CD4-positive, alpha-beta memory T cell (primary cell): ENCODE measurements at regions of chr21 and their contacts with region 1.

Region 1: GRCh38 chr21:35020902-35021301 is 28.2 kb downstream of the RUNX1 start:
- DNase-seq: no peak
- H3K4me3 ChIP-seq: no peak overlapping the region
- H3K4me3 Mint-ChIP-seq: peak overlapping the region in 4 of 8 donors; percentile 18 to 46 (median 44)
- H3K27ac ChIP-seq: peak overlapping the region; percentile 7
- H3K27ac Mint-ChIP-seq: peak overlapping the region; percentile 73 to 96 (median 82)
- H3K4me1 ChIP-seq: peaks cover 95% of the 10 kb centered on the region
- H3K4me1 Mint-ChIP-seq: peaks cover 74 to 94% (median 83%) of the 10 kb centered on the region in 4 donors
- H3K27me3 ChIP-seq: no peaks in the 10 kb centered on the region
- H3K27me3 Mint-ChIP-seq: no peaks in the 10 kb centered on the region

Region 2: GRCh38 chr21:34807146-34807880 is 213.6 kb before region 1 on chr21:
- CTCF ChIA-PET with region 1: no interaction called
- POLR2A ChIA-PET with region 1: no interaction called
- intact Hi-C with region 1: no loop called
- DNase-seq: peak; percentile 20 to 90 (median 24)
- H3K4me3 ChIP-seq: no peak overlapping the region
- H3K4me3 Mint-ChIP-seq: peak overlapping the region in 4 of 8 donors; percentile 26 to 79 (median 69)
- H3K27ac ChIP-seq: peak overlapping the region; percentile 59
- H3K27ac Mint-ChIP-seq: peak overlapping the region; percentile 75 to 99 (median 91)
- H3K4me1 ChIP-seq: peaks cover 56% of the 10 kb centered on the region
- H3K4me1 Mint-ChIP-seq: peaks cover 61 to 89% (median 73%) of the 10 kb centered on the region in 4 donors
- H3K27me3 ChIP-seq: no peaks in the 10 kb centered on the region
- H3K27me3 Mint-ChIP-seq: no peaks in the 10 kb centered on the region

Region 3: GRCh38 chr21:35002879-35003722 is 17.8 kb before region 1 on chr21:
- CTCF ChIA-PET with region 1: interaction called, 3 read pairs
- POLR2A ChIA-PET with region 1: interaction called, 17 read pairs
- intact Hi-C with region 1: loop called (anchors 2 kb)
- DNase-seq: no peak
- H3K4me3 ChIP-seq: no peak overlapping the region
- H3K4me3 Mint-ChIP-seq: peak overlapping the region in 2 of 8 donors; percentile 3 to 24
- H3K27ac ChIP-seq: no peak overlapping the region
- H3K27ac Mint-ChIP-seq: peak overlapping the region in 6 of 7 donors; percentile 3 to 72 (median 12)
- H3K4me1 ChIP-seq: peaks cover 81% of the 10 kb centered on the region
- H3K4me1 Mint-ChIP-seq: peaks cover 76 to 97% (median 87%) of the 10 kb centered on the region in 4 donors
- H3K27me3 ChIP-seq: no peaks in the 10 kb centered on the region
- H3K27me3 Mint-ChIP-seq: no peaks in the 10 kb centered on the region

Region 4: DNA sequence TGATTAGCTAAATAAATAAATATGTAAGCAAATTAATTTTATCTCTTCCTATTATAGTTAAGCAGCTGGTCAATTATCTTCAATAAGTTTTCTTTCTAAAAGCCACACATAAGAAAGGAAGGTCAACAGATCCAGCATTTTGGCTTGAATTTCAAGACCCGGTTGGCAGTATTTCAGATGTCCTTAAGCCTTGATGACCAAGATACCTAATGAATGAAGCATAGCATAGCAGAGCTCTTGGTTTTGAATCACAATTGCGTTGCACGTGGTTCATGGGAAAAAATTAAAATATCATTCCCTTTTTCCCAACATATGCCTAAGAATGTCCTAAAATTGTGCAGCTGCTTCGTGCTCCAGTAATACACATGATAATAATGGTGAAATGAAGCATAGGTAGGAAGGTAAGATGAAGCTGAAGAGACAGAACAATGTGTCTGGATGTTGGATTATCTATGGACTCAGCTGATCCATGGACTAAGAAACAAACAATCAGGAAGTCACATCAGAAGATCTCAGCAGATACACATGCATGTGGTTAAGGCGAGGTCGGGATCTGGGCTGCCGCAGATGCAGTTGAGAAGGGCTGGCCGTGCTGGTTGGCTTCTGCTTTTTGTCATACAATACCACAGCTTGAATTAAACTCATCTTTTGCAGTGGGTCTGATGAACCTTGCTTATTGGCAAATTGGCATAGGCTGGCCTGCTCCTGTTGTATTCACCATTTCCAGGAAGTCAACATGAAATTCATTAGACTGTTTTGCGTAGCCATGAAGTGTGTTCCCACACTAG is 313.1 kb after region 1 on chr21:
- CTCF ChIA-PET with region 1: no interaction called
- POLR2A ChIA-PET with region 1: no interaction called
- intact Hi-C with region 1: no loop called
- DNase-seq: no peak
- H3K4me3 ChIP-seq: no peak overlapping the region
- H3K4me3 Mint-ChIP-seq: no peak overlapping the region
- H3K27ac ChIP-seq: no peak overlapping the region
- H3K27ac Mint-ChIP-seq: no peak overlapping the region
- H3K4me1 ChIP-seq: no peaks in the 10 kb centered on the region
- H3K4me1 Mint-ChIP-seq: no peaks in the 10 kb centered on the region
- H3K27me3 ChIP-seq: no peaks in the 10 kb centered on the region
- H3K27me3 Mint-ChIP-seq: peaks cover 0 to 3% of the 10 kb centered on the region in 2 donors